Tibial artery (tissue), 4 donors: ENCODE measurements at regions of chr1 and their contacts with region 1.

Region 1: GRCh38 chr1:109773146-109773899 is 9.6 kb upstream of the EPS8L3 start:
- DNase-seq: peak; percentile 85 to 91
- H3K4me3 ChIP-seq: no peak overlapping the region
- H3K27ac ChIP-seq: no peak overlapping the region
- H3K4me1 ChIP-seq: peaks cover 0 to 7% (median 2%) of the 10 kb centered on the region in 4 donors
- H3K27me3 ChIP-seq: no peaks in the 10 kb centered on the region
- CTCF ChIP-seq: peak; percentile 86 to 93

Region 2: DNA sequence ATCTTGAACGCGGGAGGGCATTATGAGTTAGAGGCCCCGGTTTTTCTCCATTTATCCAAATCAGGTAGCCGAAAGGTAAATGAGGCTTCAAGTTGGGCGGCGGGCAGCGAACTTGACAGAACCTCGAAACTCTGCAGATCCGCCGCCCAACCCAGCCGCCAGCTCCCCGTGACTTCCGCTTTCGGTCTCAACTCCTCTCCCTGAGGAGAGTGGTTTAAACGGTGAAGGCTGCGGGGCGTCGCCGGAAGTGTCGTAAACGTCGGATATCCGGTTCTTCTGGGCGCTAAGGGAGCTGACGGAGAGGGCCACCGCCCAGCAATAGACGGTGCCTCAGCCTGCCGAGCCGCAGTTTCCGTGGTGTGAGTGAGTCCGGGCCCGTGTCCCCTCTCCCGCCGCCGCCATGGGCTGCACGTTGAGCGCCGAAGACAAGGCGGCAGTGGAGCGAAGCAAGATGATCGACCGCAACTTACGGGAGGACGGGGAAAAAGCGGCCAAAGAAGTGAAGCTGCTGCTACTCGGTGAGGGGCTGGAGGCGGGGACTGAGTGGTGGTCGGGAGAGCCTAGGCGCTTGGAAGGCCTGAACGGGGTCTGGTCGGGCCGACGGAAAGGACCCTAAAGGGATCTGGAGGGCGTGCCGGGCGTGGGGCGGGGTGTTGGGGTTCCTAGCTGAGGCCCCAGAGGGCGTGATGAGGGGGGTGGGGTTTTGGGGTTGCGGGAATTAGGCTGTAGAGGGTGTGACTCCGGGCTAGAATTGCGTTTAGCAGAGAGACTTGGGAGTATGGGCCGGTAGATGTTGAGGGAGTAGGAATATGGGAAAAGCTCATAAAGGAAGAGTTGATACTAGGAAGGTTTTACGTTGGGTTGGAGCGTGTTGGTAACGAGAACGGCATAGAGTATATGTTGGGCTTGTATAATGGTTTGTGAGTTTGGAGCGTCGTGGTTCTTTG is 224.7 kb before region 1 on chr1 and contains the start of gene GNAI3:
- intact Hi-C with region 1: loop called (anchors 5 kb)
- DNase-seq: peak; percentile 97 to 98
- H3K4me3 ChIP-seq: peak within 1 kb of the TSS; percentile 91 to 96
- H3K27ac ChIP-seq: peak within 1 kb of the TSS; percentile 94 to 96
- H3K4me1 ChIP-seq: peaks cover 0 to 53% (median 23%) of the 10 kb centered on the region in 4 donors
- H3K27me3 ChIP-seq: no peaks in the 10 kb centered on the region
- CTCF ChIP-seq: no peak

Region 3: DNA sequence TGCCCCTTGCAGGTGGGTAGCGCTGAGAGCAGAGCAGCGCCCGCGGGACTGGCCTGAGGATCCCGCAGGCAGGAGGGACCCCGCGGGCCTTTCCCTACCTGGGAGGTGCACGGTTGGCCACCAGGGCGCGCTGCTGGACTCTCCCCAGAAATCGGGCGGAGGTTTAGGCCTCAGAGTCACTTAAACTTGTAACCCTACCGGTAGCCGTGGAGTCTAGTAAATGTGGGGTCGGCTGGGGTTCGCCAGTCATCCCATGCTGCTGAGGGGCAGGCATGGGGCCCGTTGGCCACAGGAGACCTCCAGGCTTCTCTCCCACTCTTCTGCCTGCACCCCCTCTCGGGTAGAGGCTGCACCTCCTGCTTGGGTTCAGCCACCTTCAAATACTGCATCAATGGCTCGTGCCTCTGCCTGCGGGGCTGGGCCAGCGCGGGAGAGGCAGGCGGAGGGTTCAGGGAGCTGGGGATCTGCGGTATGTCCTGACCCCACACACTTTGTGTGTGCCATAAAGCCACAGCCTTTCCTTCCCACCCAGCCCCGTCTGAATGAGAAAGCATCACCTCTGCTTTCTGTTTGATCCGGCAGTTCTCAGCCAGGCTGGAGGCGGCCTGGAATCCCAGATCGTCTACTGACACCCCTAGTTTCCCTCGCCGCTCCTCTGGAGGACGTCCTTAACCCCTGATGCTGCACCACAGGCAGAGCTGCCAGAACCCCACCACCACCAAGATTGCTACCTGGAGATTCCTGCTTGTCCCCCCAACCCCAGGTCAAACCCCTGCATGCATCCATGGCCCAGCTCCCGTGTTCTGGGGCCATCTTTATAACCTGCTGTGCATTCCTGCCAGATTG is 129.7 kb before region 1 on chr1:
- intact Hi-C with region 1: loop called (anchors 5 kb)
- DNase-seq: peak; percentile 74 to 87
- H3K4me3 ChIP-seq: no peak overlapping the region
- H3K27ac ChIP-seq: no peak overlapping the region
- H3K4me1 ChIP-seq: peaks cover 0 to 9% (median 6%) of the 10 kb centered on the region in 4 donors
- H3K27me3 ChIP-seq: no peaks in the 10 kb centered on the region
- CTCF ChIP-seq: peak; percentile 83 to 86

Region 4: DNA sequence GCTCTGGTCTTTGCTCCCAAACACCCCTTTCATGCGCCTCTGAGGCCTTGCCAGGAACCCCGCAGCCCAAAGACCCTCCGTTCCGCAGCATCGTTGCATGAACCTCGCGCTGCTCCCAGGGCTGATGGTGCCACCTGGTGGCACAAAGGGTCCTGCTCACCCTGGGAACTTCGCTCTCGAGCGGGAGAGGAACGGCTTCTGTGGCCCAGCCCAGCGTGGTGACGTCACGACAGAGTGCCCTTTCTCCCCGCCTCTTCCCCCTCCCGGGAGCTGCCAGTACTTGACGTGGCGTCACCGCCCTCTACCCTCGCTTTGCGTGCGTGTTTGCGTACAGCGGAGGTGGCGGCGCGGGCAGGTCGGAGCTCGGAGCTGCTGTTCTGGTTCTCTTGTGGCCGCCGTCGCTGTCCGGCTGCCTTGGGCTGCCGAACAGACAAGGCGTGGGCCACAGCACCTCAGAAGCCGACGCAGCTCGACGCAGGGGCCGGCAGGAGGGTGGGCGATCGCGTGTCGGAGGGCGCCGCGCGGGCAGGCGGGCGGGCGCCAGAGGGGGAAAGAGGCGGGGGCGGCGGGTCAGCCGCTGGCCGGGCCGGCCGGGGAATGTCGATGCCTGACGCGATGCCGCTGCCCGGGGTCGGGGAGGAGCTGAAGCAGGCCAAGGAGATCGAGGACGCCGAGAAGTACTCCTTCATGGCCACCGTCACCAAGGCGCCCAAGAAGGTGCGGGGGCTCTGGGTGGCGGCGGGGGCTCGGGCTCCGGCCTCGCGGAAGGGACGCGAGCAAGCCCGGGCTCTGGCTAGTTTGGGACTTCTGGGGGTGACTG is 211.3 kb after region 1 on chr1 and contains the start of gene AHCYL1:
- intact Hi-C with region 1: loop called (anchors 1 kb)
- DNase-seq: peak; percentile 99
- H3K4me3 ChIP-seq: peak within 1 kb of the TSS; percentile 75 to 77
- H3K27ac ChIP-seq: peak within 1 kb of the TSS; percentile 94 to 97
- H3K4me1 ChIP-seq: peaks cover 4 to 61% (median 35%) of the 10 kb centered on the region in 4 donors
- H3K27me3 ChIP-seq: no peaks in the 10 kb centered on the region
- CTCF ChIP-seq: peak; percentile 98 to 100